ENCODE measurements at regions of chr14 and their contacts with region 1.

Region 1: GRCh38 chr14:68312884-68313610 is 479.8 kb downstream of the ZFP36L1 start:
- DNase-seq: peak; percentile 44
- CTCF ChIP-seq: no peak

Region 2: GRCh38 chr14:68408680-68409079 is 95.6 kb after region 1 on chr14:
- in situ Hi-C with region 1: loop called (anchors 10 kb)
- DNase-seq: no peak
- CTCF ChIP-seq: peak; percentile 41

Region 3: GRCh38 chr14:68444449-68445168 is 131.6 kb after region 1 on chr14:
- in situ Hi-C with region 1: no loop called
- DNase-seq: no peak
- CTCF ChIP-seq: no peak